Sciatic nerve (tissue), 2 donors: ENCODE measurements at regions of chr2 and their contacts with region 1.

Region 1: GRCh38 chr2:120210262-120210693 is 12.9 kb downstream of the TMEM185B start:
- DNase-seq: no peak
- ATAC-seq: no peak

Region 2: DNA sequence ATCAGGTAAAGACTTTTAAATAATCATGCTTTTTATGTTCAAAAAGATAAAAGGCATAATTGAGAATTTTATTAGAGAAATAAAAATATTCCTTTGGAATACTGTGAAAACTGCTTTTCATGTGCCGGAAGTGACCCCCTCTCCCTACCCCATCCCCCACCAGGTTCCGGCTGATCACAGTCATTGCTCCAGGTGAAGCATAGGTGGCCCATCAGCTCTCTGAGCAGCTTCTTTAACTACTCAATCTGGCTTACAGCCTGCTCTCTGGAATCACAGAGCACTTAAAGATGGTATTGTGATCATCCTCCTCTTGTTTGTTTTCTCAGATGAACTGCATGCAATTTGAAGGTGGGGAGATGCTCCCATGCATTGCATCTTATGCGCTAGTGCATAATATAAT is 1620.6 kb before region 1 on chr2:
- intact Hi-C with region 1: loop called (anchors 5 kb)
- DNase-seq: no peak
- ATAC-seq: no peak

Region 3: DNA sequence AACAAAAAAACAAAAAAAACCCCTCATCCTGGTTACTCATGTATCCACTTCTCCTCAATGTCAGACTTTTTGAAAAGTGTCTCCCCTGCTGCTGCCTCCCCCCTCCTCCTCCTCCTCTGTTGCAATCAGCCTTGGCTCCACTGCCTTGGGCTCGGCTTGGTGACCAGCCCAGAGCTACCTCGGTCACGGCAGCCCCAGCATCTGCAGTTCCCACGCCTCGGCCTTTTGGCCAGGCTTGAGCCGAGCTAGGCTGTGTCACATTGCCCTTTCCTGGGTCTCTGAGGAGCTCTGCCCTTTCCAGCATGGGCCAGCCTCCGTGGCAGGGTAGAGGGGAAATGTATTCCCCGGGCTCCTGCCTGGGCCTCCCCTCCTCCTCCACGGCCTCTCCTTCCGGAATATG is 112.9 kb after region 1 on chr2:
- intact Hi-C with region 1: no loop called
- DNase-seq: peak; percentile 77
- ATAC-seq: peak; percentile 91